ENCODE measurements at regions of chr7 and their contacts with region 1.

Region 1: DNA sequence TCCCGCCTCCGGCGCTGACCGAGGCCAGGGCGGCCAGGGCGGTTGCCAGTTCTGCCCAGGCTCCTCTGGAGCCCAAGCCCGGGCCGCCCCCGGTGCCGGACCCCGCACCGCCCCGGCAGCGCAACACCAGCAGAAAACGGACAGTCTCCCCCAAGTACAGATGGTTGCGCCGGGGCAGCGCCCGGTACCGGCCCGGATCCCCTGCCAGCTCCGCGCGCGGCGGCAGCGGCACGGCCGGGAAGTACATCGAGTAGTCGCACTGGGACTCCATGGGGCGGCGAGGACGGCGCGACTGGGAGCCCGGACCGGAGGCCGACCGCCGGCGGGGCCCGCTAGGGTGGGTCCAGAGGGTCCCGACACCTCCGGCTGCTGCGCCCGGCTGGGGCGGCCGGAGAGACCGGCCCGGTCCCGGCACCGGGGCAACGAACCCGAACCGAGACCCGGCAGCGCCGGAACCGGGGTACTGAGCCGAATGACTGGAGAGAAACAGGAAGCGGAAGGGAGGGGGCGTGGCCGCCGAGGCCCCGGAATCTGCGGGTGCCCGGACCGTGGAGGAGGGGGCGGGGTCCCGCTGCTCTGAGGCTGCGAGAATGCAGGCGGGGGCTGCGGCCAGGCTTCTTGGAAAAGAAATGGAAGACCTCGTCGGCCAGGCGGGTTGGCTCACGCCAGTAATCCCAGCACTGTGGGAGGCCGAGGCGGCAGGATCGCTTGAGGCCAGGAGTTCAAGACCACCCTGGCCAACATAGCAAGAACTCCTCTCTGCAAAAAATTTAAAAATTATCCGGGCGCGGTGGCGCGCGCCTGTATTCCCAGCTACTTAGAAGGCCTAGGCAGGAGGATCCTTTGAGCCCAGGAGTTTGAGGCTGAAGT is at the start of gene TRAPPC14:
- DNase-seq: peak; percentile 79 to 95 (median 88)
- ATAC-seq: peak; percentile 93
- H3K4me3 ChIP-seq: peak within 1 kb of the TSS; percentile 79
- H3K4me3 Mint-ChIP-seq: peak within 1 kb of the TSS; percentile 83 to 93 (median 88)
- H3K27ac ChIP-seq: peak within 1 kb of the TSS; percentile 88
- H3K27ac Mint-ChIP-seq: peak within 1 kb of the TSS; percentile 77 to 98 (median 89)
- H3K4me1 ChIP-seq: peaks cover 13 to 35% of the 10 kb centered on the region in 2 donors
- H3K4me1 Mint-ChIP-seq: peaks cover 39 to 81% (median 66%) of the 10 kb centered on the region in 7 donors
- H3K27me3 ChIP-seq: no peaks in the 10 kb centered on the region
- H3K27me3 Mint-ChIP-seq: no peaks in the 10 kb centered on the region
- total RNA-seq, gene TRAPPC14: 51.8 to 102 (median 70.2) TPM

Region 2: DNA sequence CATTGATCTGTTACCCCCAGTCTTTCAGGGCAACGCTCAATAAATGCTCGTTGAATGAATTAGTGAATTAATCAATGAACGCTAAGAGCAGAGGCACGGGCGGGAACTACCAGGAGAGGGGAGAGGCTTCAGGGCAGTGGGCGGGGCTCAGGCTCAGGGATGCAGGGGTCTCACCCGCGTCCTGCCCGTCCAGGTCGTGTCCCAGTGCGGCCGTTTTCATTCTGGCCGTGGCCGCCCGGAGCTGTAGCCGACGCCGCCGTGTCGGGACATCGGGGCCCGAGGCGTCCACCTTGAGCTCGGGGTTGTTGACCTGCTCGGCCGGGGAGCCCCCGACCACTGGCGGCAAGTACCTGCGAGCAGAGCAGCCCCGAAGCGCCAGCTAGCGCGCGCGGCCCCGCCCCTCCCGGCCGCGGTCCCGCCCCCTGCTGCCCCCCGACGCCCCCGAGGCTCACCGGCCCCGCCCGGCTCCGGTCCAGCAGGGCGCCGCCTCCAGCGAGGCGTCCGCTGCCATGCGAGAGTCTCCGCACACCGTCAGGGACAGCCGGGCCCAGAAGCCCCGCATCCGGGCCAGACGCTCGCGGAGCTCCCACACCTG is 12.7 kb after region 1 on chr7:
- CTCF ChIA-PET with region 1: interaction called, 16 read pairs
- POLR2A ChIA-PET with region 1: interaction called, 383 read pairs
- intact Hi-C with region 1: loop called (anchors 1 kb)
- DNase-seq: peak in 3 of 9 donors; percentile 23 to 38 (median 25)
- ATAC-seq: peak; percentile 40
- H3K4me3 ChIP-seq: peak overlapping the region; percentile 56
- H3K4me3 Mint-ChIP-seq: peak overlapping the region; percentile 65 to 95 (median 90)
- H3K27ac ChIP-seq: peak overlapping the region; percentile 81
- H3K27ac Mint-ChIP-seq: peak overlapping the region in 8 of 9 donors; percentile 86 to 99 (median 95)
- H3K4me1 ChIP-seq: peaks cover 21 to 52% of the 10 kb centered on the region in 2 donors
- H3K4me1 Mint-ChIP-seq: peaks cover 51 to 78% (median 66%) of the 10 kb centered on the region in 7 donors
- H3K27me3 ChIP-seq: no peaks in the 10 kb centered on the region
- H3K27me3 Mint-ChIP-seq: peaks cover 0 to 27% (median 5%) of the 10 kb centered on the region in 5 donors

Region 3: DNA sequence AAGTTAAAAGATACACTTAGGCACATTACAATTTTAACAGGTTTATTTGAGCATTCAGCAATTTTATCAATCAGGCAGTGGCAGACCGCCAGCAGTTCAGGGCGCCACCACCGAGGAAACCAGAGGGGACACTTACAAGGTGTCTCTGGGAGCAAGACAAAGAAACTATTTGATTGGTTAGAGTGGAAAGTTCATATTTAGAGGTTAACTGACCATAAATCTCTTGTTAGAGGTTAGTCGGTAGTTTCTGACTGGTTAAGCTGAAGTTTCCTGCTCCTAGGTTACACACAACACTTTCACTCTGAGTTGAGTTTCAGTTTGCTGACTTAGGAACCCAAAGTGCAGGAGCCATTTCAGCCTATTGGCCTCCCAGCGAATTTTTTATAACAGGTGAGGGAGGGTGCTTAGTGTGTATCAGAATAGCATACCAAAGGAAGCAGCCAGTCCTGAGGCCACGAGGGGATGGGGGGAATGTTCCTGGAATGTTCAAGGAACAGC is 50.5 kb after region 1 on chr7:
- CTCF ChIA-PET with region 1: interaction called, 3 read pairs
- POLR2A ChIA-PET with region 1: interaction called, 5 read pairs
- intact Hi-C with region 1: loop called in 1 of 2 experiments (anchors 2 kb)
- DNase-seq: peak in 6 of 9 donors; percentile 29 to 38 (median 34)
- ATAC-seq: peak; percentile 54
- H3K4me3 ChIP-seq: peak overlapping the region; percentile 45
- H3K4me3 Mint-ChIP-seq: peak overlapping the region; percentile 46 to 77 (median 74)
- H3K27ac ChIP-seq: peak overlapping the region; percentile 49
- H3K27ac Mint-ChIP-seq: peak overlapping the region; percentile 66 to 98 (median 87)
- H3K4me1 ChIP-seq: peaks cover 44 to 45% of the 10 kb centered on the region in 2 donors
- H3K4me1 Mint-ChIP-seq: peaks cover 39 to 56% (median 54%) of the 10 kb centered on the region in 7 donors
- H3K27me3 ChIP-seq: no peaks in the 10 kb centered on the region
- H3K27me3 Mint-ChIP-seq: no peaks in the 10 kb centered on the region

Region 4: GRCh38 chr7:100538654-100539435 is 380.4 kb after region 1 on chr7 and contains the start of gene AGFG2:
- CTCF ChIA-PET with region 1: no interaction called
- POLR2A ChIA-PET with region 1: no interaction called
- intact Hi-C with region 1: no loop called
- DNase-seq: peak; percentile 98 to 100 (median 100)
- ATAC-seq: peak; percentile 99
- H3K4me3 ChIP-seq: peak within 1 kb of the TSS; percentile 73
- H3K4me3 Mint-ChIP-seq: peak within 1 kb of the TSS; percentile 85 to 100 (median 96)
- H3K27ac ChIP-seq: peak within 1 kb of the TSS; percentile 64
- H3K27ac Mint-ChIP-seq: peak within 1 kb of the TSS; percentile 82 to 97 (median 90)
- H3K4me1 ChIP-seq: peaks cover 30 to 39% of the 10 kb centered on the region in 2 donors
- H3K4me1 Mint-ChIP-seq: peaks cover 26 to 53% (median 48%) of the 10 kb centered on the region in 7 donors
- H3K27me3 ChIP-seq: no peaks in the 10 kb centered on the region
- H3K27me3 Mint-ChIP-seq: peaks cover 0 to 2% (median 0%) of the 10 kb centered on the region in 5 donors
- total RNA-seq, gene AGFG2: 15.8 to 42.4 (median 23.3) TPM

Measured in naive thymus-derived CD4-positive, alpha-beta T cell (primary cell).